MCF 10A (cell line): ENCODE measurements at regions of chr5 and their contacts with region 1.

Region 1: DNA sequence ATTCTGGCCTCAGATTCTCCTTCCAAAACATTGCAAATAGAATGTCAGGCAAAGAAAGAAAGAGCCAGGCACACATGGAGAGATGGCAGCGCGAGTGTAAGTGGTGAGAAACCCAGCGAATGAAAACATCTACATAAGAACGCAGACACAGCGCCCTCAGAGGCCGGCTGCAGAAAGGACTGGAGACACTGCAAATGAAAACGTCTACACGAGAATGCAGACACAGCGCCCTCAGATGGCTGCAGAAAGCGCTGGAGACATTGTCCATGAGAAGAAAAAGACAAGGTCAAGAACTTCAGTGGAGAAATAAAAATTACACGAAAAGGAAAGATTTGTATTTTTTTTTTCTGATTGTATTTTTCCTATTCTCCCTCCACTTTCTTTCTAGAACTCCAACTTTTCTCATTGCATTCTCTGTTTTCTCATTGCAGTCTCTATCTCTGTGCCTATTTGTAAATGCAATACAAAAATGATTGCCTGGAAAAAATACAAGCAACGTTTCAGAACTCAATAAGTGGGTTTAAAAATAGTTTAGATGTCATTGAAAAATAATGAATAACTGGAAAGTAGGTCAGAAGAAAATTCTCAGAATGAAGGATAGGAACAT is 117.9 kb upstream of the LPCAT1 start:
- DNase-seq: peak; percentile 77
- H3K4me3 Mint-ChIP-seq: no peak overlapping the region
- H3K27ac Mint-ChIP-seq: no peak overlapping the region
- H3K4me1 Mint-ChIP-seq: no peaks in the 10 kb centered on the region
- H3K27me3 Mint-ChIP-seq: peaks cover 44% of the 10 kb centered on the region
- CTCF ChIP-seq: peak; percentile 90

Region 2: DNA sequence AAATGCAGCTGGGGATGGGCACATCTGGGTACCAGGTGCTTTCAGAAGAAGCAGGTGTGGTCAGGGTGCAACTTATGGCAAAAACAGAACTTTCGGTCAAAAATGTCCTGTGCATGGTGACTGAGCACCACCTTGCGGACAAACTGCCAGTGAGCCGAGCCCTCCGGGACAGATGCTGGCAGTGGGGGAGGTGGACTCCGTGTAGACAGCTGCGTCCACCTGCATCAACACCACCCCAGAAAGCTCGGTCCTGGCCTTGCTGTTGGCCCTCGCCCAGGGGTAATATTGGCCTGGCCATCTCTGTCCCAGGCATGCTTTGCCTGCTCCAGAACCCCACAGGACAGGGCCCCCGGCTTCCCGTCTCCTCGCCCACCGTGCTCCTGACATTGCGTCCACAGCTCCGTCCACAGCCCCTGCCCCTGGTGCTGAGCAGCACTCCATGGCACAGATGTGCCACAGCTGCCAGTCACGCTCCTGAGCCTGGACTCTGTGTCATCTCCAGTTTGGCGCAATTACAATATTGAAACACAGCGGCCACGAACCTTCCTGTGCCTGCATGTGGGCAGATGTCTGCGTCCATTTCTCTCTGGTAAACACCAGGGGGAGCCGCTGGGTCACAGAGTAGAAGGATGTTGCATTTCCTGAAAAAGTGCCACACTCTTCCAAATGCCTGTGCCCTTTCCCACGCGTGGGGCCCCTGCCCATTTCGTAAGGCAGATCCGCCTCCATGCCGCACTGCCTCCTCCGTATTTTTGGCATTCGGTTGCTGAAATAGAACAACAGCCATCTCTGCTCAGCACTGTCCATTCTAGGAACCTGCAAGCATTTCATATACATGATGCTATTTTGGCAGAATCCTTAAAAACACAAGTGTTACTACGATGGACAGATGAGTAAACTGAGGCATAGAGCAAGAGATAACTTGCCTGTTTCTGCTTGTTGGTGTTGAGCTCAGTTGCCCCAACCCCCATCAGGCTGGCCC is 473.6 kb before region 1 on chr5:
- CTCF ChIA-PET with region 1: interaction called, 20 read pairs
- POLR2A ChIA-PET with region 1: interaction called, 5 read pairs
- intact Hi-C with region 1: loop called (anchors 1 kb)
- DNase-seq: peak; percentile 75
- H3K4me3 Mint-ChIP-seq: peak overlapping the region; percentile 50
- H3K27ac Mint-ChIP-seq: no peak overlapping the region
- H3K4me1 Mint-ChIP-seq: peaks cover 8% of the 10 kb centered on the region
- H3K27me3 Mint-ChIP-seq: peaks cover 12% of the 10 kb centered on the region
- CTCF ChIP-seq: peak; percentile 75

Region 3: GRCh38 chr5:1351156-1351555 is 290.5 kb before region 1 on chr5:
- CTCF ChIA-PET with region 1: interaction called, 5 read pairs
- POLR2A ChIA-PET with region 1: no interaction called
- intact Hi-C with region 1: loop called (anchors 10 kb)
- DNase-seq: no peak
- H3K4me3 Mint-ChIP-seq: no peak overlapping the region
- H3K27ac Mint-ChIP-seq: no peak overlapping the region
- H3K4me1 Mint-ChIP-seq: peaks cover 3% of the 10 kb centered on the region
- H3K27me3 Mint-ChIP-seq: peaks cover 40% of the 10 kb centered on the region
- CTCF ChIP-seq: no peak

Region 4: GRCh38 chr5:1479581-1480188 is 162.0 kb before region 1 on chr5:
- CTCF ChIA-PET with region 1: interaction called, 3 read pairs
- POLR2A ChIA-PET with region 1: no interaction called
- intact Hi-C with region 1: loop called (anchors 1 kb)
- DNase-seq: peak; percentile 41
- H3K4me3 Mint-ChIP-seq: no peak overlapping the region
- H3K27ac Mint-ChIP-seq: no peak overlapping the region
- H3K4me1 Mint-ChIP-seq: no peaks in the 10 kb centered on the region
- H3K27me3 Mint-ChIP-seq: no peaks in the 10 kb centered on the region
- CTCF ChIP-seq: peak; percentile 53

Region 5: GRCh38 chr5:1511651-1512540 is 129.8 kb before region 1 on chr5:
- CTCF ChIA-PET with region 1: interaction called, 3 read pairs
- POLR2A ChIA-PET with region 1: no interaction called
- intact Hi-C with region 1: loop called (anchors 1 kb)
- DNase-seq: peak; percentile 19
- H3K4me3 Mint-ChIP-seq: no peak overlapping the region
- H3K27ac Mint-ChIP-seq: no peak overlapping the region
- H3K4me1 Mint-ChIP-seq: no peaks in the 10 kb centered on the region
- H3K27me3 Mint-ChIP-seq: no peaks in the 10 kb centered on the region
- CTCF ChIP-seq: peak; percentile 15